H1 (cell line): ENCODE measurements at regions of chr1 and their contacts with region 1.

Region 1: GRCh38 chr1:160211046-160211790 is 6.0 kb downstream of the PEA15 start:
- DNase-seq: no peak
- H3K4me3 ChIP-seq: no peak overlapping the region
- H3K27ac ChIP-seq: peak overlapping the region; percentile 27; the same call in 1 of the 2 replicates
- H3K4me1 ChIP-seq: peaks cover 13 to 28% (median 16%) of the 10 kb centered on the region in 4 experiments
- H3K27me3 ChIP-seq: no peaks in the 10 kb centered on the region
- CTCF ChIP-seq: no peak
- EP300 ChIP-seq: no peak
- POLR2A ChIP-seq: no peak
- RAD21 ChIP-seq: no peak

Region 2: DNA sequence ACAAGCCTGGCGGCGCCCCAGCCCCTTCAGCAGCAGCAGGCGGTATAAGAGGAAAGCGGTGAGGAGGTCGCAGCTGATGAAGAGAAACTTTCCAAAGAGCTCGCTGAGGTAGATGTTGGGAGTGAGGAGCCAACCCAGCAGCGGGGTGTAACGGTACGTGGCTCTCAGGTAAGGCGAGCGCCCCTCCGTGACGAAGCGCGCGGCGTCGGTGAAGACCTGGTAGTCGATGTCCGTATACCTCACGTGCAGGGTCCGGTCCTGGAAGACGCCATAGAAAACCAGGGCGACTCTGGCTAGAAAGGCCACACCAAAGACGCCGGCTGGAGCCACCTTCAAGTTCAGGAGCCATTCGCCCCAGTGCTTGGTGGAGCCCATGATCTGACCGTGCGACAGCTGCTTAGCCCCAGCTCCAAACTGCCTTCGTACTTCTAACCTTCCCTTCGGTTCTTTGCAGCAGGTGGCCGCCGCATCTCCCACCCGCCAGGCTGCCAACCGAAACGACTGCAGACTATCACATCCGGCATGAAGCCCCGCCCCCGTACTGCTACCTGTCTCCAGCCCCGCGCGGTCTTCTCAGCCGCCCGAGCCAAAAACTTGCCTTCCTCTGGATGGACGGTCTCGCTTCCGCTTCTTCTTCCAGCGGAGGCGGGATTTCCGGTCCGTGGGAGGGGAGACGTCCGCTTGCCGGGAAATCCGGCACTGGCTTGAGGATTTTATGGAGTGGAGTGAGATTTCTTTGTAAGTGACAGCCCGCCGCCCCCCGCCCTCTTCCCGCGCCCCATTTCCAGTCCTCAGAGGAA is 179.7 kb before region 1 on chr1 and contains the start of gene PIGM:
- CTCF ChIA-PET with region 1: no interaction called
- POLR2A ChIA-PET with region 1: no interaction called
- DNase-seq: peak; percentile 91 to 95
- H3K4me3 ChIP-seq: peak within 1 kb of the TSS; percentile 72 to 88 (median 80)
- H3K27ac ChIP-seq: peak within 1 kb of the TSS; percentile 72
- H3K4me1 ChIP-seq: peaks cover 0 to 6% (median 2%) of the 10 kb centered on the region in 4 experiments; a peak in 5 of 7 replicates
- H3K27me3 ChIP-seq: no peaks in the 10 kb centered on the region; a peak in 2 of 7 replicates
- CTCF ChIP-seq: no peak
- EP300 ChIP-seq: peak in 1 of 2 experiments; percentile 63; a peak in 1 of 3 replicates
- POLR2A ChIP-seq: peak in 1 of 2 experiments; percentile 76; a peak in 2 of 3 replicates
- RAD21 ChIP-seq: no peak
- total RNA-seq, gene PIGM: 5.1 and 5.4 TPM in 2 replicates

Region 3: GRCh38 chr1:160085686-160086455 is 125.3 kb before region 1 on chr1:
- CTCF ChIA-PET with region 1: interaction called, 15 read pairs
- POLR2A ChIA-PET with region 1: interaction called, 4 read pairs
- DNase-seq: peak; percentile 88 to 96
- H3K4me3 ChIP-seq: no peak overlapping the region
- H3K27ac ChIP-seq: no peak overlapping the region
- H3K4me1 ChIP-seq: peaks cover 0 to 5% (median 3%) of the 10 kb centered on the region in 4 experiments; a peak in 4 of 7 replicates
- H3K27me3 ChIP-seq: peaks cover 0 to 35% (median 27%) of the 10 kb centered on the region in 4 experiments; a peak in 6 of 7 replicates
- CTCF ChIP-seq: peak; percentile 91 to 99 (median 95)
- EP300 ChIP-seq: no peak
- POLR2A ChIP-seq: no peak
- RAD21 ChIP-seq: peak; percentile 83 to 88